MCF 10A (cell line): ENCODE measurements at regions of chr11 and their contacts with region 1.

Region 1: DNA sequence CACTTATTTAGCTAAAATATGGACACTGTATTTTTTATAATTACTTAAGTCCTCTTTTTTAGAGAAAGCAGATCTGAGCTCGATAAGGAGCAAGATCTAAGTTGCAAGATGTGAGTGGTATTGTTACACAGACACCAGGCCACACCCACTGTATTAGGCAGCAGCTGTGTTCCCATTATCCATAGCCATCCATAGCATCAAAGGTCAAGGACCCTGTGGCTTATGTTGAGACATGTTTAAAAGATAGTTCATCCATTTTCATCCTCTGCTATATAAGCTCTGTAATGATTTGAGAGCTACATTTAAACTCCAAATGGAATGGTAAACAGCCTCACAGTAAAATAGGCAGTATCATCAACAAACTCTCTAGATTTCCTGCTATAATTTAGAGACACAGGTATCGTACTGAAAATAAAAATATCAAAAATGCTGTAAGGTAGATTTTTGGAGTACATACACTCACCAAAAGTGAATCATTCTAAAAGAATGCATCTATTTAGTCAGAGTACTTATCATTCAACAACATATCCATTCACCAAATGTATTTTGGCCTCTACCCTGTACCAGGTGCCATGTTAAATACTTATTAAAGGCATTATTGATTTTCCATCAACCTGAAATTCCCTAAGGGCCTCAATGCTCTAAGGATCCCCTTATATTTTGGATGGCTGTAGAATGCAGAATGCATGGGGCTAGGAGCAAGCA is 574.0 kb downstream of the LRRC4C start:
- DNase-seq: no peak
- H3K4me3 Mint-ChIP-seq: no peak overlapping the region
- H3K27ac Mint-ChIP-seq: no peak overlapping the region
- H3K4me1 Mint-ChIP-seq: no peaks in the 10 kb centered on the region
- H3K27me3 Mint-ChIP-seq: no peaks in the 10 kb centered on the region
- CTCF ChIP-seq: no peak

Region 2: GRCh38 chr11:40838181-40838683 is 47.2 kb before region 1 on chr11:
- CTCF ChIA-PET with region 1: no interaction called
- POLR2A ChIA-PET with region 1: no interaction called
- intact Hi-C with region 1: loop called (anchors 2 kb)
- DNase-seq: no peak
- H3K4me3 Mint-ChIP-seq: no peak overlapping the region
- H3K27ac Mint-ChIP-seq: no peak overlapping the region
- H3K4me1 Mint-ChIP-seq: peaks cover 5% of the 10 kb centered on the region
- H3K27me3 Mint-ChIP-seq: no peaks in the 10 kb centered on the region
- CTCF ChIP-seq: no peak